ENCODE measurements at regions of chr20 and their contacts with region 1.

Region 1: GRCh38 chr20:31951530-31952453 is at the start of gene PDRG1:
- DNase-seq: peak; percentile 96
- H3K4me3 Mint-ChIP-seq: peak within 1 kb of the TSS; percentile 97
- H3K27ac Mint-ChIP-seq: peak within 1 kb of the TSS; percentile 95
- H3K4me1 Mint-ChIP-seq: peaks cover 28% of the 10 kb centered on the region
- H3K27me3 Mint-ChIP-seq: peaks cover 8% of the 10 kb centered on the region
- total RNA-seq, gene PDRG1: 20.0 and 20.5 TPM in 2 replicates

Region 2: DNA sequence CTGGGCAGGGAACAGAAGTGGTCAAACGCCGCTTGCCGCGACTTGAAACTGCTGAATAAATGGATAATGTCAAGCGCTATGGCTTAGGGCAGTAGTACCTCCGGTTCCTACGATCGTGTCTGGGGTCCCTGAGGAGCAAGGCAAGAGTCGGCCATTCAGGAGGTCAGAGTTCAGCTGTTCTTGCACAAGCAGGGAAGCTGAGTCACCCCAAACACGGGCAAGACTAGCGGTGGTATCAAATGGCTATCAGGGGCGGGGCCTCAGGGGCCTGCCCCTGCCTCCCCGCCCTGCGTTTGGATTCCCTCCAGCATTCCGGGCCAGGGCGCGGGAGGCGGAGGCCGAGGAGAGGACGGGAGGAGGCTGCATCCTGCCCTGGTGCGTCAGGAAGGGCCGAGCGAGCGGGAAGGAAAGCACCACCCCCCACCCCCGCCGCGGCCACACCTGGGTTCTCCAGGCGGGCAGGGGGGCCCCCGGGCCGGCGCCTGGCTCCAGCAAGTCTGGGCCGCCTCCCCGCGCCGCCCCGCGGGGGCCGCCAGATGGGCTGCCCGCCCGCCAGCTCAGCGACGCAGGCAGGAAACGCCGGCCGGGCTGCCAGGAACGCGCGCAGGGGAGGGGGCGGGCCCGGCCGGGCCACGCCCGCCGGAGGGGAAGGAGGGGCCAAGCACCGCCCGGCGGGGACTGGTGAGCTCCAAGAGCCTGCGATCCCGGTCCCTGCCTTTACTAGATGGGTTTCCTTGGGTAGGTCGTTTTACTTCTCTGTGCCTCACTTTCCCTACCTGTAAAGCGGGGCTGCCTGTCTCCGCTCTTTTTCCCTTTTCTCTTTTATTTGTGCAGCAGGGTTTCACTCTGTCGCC is 378.9 kb before region 1 on chr20:
- intact Hi-C with region 1: loop called (anchors 1 kb)
- DNase-seq: peak; percentile 80
- H3K4me3 Mint-ChIP-seq: peak overlapping the region; percentile 88
- H3K27ac Mint-ChIP-seq: peak overlapping the region; percentile 88
- H3K4me1 Mint-ChIP-seq: peaks cover 20% of the 10 kb centered on the region
- H3K27me3 Mint-ChIP-seq: no peaks in the 10 kb centered on the region

Region 3: DNA sequence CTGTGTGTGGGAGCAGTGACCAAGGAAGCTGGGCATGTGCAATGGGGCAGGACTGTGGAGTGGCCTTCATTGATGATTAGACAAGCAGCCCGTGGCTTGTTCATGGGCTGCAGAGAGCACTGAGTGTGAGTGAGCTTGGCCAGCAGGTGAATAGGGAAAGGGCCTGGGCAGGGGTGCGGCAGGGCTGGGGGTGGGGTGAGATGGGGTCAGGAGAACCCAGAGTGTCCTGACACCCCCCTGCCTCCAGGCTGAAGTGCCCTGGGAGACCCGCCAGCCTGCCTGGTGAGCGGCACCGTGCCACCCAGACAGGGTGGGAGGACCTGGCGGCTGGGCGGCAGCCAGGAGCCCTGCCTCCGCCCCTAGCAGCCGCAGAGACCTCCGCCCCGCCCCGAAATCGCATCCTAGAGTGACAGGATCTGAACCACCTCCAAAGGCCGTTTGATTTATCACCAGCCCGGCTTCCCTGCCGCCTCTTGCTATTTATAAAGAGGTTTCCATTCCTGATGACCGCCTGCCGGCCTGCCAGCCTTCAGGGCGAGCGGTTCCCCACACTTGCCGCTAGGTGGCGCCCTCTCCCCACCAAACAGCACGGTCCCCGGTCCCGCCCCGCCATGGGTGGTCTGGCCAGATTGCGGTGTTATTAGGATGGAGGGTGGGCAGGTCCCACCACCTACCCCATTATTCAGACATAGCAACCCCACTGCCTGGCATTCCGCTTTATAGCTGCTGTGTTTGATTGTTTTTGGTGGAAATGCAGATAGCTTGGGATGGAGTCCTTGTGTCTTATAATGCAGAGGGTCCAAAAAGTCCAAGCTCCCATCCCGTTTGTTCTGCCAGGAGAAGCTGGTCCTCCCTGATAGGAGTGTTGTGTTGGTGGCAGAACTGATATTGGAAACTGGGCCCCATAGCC is 129.1 kb before region 1 on chr20:
- intact Hi-C with region 1: loop called (anchors 1 kb)
- DNase-seq: peak; percentile 58
- H3K4me3 Mint-ChIP-seq: no peak overlapping the region
- H3K27ac Mint-ChIP-seq: no peak overlapping the region
- H3K4me1 Mint-ChIP-seq: no peaks in the 10 kb centered on the region
- H3K27me3 Mint-ChIP-seq: peaks cover 1% of the 10 kb centered on the region

Region 4: DNA sequence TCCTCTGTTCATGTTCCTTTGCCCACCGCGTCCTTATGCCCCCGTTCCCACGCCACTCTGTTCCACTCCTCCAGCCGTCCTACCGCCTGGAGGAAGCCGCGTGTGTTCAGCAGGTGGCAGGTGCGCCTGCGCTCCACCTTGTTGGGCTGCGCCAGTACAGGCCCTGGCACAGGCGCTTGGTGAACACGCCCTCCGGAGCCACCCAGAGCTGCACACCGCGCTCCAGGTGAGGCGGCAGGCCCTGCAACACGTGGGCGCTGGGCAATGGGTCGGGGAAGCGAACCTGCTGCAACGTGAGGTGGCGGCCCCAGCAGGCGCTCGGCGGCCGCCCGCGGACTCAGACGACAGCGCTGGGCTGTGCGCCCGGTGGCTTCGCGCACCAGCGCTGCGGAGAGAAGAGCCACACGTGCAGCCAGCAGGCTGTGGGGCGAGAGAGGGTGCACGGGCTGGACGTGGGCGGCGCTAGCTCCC is 102.3 kb before region 1 on chr20:
- intact Hi-C with region 1: loop called (anchors 1 kb)
- DNase-seq: no peak
- H3K4me3 Mint-ChIP-seq: no peak overlapping the region
- H3K27ac Mint-ChIP-seq: no peak overlapping the region
- H3K4me1 Mint-ChIP-seq: no peaks in the 10 kb centered on the region
- H3K27me3 Mint-ChIP-seq: peaks cover 20% of the 10 kb centered on the region

Region 5: GRCh38 chr20:31879143-31879987 is 72.4 kb before region 1 on chr20:
- intact Hi-C with region 1: loop called (anchors 1 kb)
- DNase-seq: peak; percentile 78
- H3K4me3 Mint-ChIP-seq: peak overlapping the region; percentile 92
- H3K27ac Mint-ChIP-seq: peak overlapping the region; percentile 77
- H3K4me1 Mint-ChIP-seq: peaks cover 24% of the 10 kb centered on the region
- H3K27me3 Mint-ChIP-seq: peaks cover 27% of the 10 kb centered on the region

Region 6: DNA sequence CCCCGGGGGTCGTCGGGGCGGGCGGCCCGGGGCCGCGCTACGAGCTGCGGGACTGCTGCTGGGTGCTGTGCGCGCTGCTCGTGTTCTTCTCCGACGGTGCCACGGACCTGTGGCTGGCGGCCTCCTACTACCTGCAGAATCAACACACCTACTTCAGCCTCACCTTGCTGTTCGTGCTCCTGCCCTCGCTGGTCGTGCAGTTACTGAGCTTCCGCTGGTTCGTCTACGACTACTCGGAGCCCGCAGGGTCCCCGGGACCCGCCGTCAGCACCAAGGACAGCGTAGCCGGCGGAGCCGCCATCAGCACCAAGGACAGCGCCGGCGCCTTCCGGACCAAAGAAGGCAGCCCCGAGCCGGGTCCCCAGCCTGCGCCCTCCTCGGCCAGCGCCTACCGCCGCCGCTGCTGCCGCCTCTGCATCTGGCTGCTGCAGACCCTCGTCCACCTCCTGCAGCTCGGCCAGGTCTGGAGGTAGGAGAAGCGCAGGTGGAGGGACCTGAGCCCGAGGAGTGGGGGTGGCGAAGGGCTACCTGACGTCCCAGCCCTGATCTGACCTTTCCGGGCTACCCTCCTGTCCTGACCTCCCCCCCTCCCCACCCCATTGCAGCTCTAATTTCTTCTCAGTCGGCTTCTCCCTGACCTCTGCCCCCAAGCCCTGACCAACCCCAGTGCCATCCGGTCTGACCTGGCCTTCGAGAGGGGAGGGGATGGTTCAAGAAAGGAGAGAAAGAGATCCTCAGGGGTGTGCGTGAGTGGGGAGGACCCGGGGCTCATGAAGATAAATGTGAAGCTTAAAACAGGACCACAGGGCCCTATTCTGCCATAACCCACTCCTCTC is 16.7 kb after region 1 on chr20:
- intact Hi-C with region 1: loop called (anchors 1 kb)
- DNase-seq: peak; percentile 79
- H3K4me3 Mint-ChIP-seq: peak overlapping the region; percentile 81
- H3K27ac Mint-ChIP-seq: no peak overlapping the region
- H3K4me1 Mint-ChIP-seq: peaks cover 5% of the 10 kb centered on the region
- H3K27me3 Mint-ChIP-seq: peaks cover 36% of the 10 kb centered on the region

Region 7: DNA sequence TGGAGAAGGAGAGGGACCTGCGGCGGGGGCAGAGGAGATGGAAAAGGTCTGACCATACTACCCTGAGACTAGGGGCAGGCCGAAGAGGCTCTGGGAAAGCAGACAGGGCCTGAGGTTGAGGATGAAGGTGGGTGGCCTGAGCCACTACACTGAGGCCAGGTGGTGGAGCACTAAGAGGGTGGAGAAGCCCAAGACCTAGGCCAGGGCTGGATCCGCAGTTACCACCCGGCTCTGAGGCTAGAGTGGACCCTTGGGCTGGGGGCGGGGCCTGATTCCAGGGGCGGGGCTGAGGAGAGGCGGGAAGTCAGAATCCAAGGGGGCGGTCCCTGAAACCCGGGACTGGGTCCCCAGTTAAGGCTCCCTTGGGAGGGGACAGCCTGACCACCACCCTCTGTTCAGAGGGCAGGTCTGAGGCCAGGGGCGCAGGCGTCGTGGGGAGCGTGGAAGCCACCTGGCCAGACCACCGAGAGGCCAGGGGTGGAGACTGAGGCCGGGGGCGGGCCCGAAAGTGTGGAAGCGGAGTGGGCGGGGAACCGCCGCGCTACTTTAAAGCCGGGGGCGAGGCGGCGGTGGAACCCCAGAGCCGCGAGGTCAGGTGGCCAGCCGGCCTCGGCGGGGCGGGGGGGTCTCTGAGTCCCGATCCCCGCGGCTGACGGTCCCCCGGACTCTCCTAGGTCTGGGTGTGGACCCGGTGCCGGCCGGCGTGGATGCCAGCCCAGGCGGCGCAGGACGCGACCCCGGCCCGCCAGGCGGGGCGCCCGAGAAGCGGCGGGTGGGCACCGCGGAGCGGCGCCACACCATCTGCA is 66.7 kb after region 1 on chr20:
- intact Hi-C with region 1: no loop called
- DNase-seq: peak; percentile 5
- H3K4me3 Mint-ChIP-seq: peak overlapping the region; percentile 74
- H3K27ac Mint-ChIP-seq: no peak overlapping the region
- H3K4me1 Mint-ChIP-seq: peaks cover 20% of the 10 kb centered on the region
- H3K27me3 Mint-ChIP-seq: peaks cover 69% of the 10 kb centered on the region

Region 8: DNA sequence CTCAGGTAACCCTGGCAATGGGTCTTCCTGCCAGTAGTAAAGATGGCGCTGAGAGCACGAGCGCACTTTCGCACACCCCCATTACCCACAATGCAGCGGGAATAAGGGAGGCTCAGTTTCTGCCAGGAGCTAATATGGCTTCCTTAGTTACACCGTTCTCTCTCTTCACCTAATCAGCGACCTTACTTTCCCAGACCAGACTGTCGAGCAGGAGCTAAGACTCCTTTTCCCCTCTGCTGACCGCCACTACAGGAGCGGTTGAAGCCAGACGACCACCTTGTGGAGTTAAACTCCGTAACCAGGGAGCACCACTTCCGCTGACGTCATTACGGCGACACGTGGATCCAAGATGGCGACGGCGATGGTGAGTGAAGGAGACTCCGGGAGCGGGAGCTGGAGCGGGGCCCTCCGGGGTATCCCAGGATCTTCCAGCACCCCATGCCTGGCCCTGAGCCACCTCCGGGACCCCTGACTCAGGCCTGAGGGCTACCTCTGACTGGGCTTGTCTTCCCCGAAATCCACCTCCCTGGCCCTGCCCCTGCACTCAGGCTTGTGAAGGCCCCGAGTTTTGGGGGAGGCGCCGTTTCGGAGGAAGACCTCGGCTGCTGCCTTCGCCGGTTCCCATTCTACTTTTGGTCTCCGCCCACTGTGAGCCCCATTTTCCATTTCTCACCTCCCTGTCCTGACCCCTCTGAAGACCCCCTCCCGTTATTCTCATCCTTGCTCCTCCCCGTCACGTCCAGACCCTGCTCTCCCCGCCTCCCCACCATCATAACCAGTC is 157.8 kb after region 1 on chr20 and contains the start of gene TM9SF4:
- intact Hi-C with region 1: loop called (anchors 1 kb)
- DNase-seq: peak; percentile 84
- H3K4me3 Mint-ChIP-seq: peak within 1 kb of the TSS; percentile 92
- H3K27ac Mint-ChIP-seq: peak within 1 kb of the TSS; percentile 99
- H3K4me1 Mint-ChIP-seq: peaks cover 35% of the 10 kb centered on the region
- H3K27me3 Mint-ChIP-seq: peaks cover 4% of the 10 kb centered on the region
- total RNA-seq, gene TM9SF4: 49.5 and 49.6 TPM in 2 replicates